Gastrocnemius medialis (tissue), 4 donors: ENCODE measurements at regions of chr14 and their contacts with region 1.

Region 1: GRCh38 chr14:76386915-76387782 is 11.2 kb downstream of the ESRRB start:
- DNase-seq: peak; percentile 10 to 56
- ATAC-seq: peak; percentile 79 to 91
- H3K4me3 ChIP-seq: no peak overlapping the region
- H3K27ac ChIP-seq: no peak overlapping the region
- H3K4me1 ChIP-seq: no peaks in the 10 kb centered on the region
- H3K27me3 ChIP-seq: no peaks in the 10 kb centered on the region
- CTCF ChIP-seq: peak; percentile 69 to 92 (median 86)
- POLR2A ChIP-seq: no peak

Region 2: DNA sequence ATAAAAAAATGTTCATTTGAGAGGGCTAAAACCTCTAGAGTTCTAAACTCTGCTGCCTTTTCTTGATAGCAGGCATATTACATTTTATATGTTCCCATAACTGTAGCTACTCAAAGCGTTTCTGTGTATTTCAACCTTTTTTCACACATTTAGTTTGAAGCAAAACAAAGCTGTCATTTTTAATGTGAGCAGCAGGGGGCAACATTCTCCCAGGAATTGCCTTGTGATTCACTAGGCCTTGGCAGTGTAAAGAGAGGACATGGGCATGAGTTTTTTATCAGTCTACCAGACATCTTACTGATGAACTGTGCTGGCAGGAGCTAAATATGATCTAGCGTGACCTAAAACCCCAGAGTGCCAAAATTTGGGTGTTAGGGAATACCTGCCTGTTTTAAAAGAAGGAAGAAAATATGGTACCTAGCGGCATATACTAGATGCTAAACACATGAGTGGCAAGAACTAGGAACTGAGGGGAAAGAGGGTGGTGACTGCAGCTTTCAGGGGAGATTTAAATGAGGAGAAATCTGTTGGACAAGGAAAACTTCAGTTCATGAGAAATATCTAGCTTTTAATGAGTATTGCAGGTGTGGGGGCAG is 336.3 kb before region 1 on chr14:
- in situ Hi-C with region 1: loop called in 2 of 4 experiments (anchors 10 kb)
- intact Hi-C with region 1: loop called (anchors 1 kb)
- DNase-seq: peak; percentile 11 to 29
- ATAC-seq: peak; percentile 75 to 84
- H3K4me3 ChIP-seq: no peak overlapping the region
- H3K27ac ChIP-seq: no peak overlapping the region
- H3K4me1 ChIP-seq: no peaks in the 10 kb centered on the region
- H3K27me3 ChIP-seq: no peaks in the 10 kb centered on the region
- CTCF ChIP-seq: peak; percentile 75 to 86 (median 80)
- POLR2A ChIP-seq: no peak

Region 3: GRCh38 chr14:76672123-76672522 is 285.0 kb after region 1 on chr14:
- in situ Hi-C with region 1: no loop called
- intact Hi-C with region 1: no loop called
- DNase-seq: no peak
- ATAC-seq: no peak
- H3K4me3 ChIP-seq: no peak overlapping the region
- H3K27ac ChIP-seq: no peak overlapping the region
- H3K4me1 ChIP-seq: no peaks in the 10 kb centered on the region
- H3K27me3 ChIP-seq: no peaks in the 10 kb centered on the region
- CTCF ChIP-seq: no peak
- POLR2A ChIP-seq: no peak